Ascending aorta (tissue), 2 donors: ENCODE measurements at regions of chr4 and their contacts with region 1.

Region 1: DNA sequence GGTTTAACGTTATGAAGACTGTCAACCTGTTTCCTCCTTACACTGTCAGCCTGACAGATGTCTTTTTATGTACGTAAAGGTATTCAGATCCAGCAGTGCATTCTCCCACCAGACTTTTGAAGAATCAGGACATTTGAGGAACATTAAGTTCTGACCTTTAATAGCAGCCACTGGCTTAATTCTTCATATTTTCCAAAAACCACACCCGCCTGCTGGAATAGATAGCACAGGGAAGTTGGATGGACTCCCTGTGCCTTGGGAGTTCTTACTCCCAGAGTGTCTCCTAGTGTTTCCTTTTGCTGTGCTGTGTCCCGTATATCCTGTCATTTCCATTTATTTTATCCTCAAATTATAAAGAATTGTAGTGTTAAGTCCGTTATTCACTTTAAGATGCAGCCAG is 94.5 kb downstream of the AFF1 start:
- DNase-seq: peak in 1 of 2 donors; percentile 77
- H3K4me3 ChIP-seq: peak overlapping the region in 1 of 2 donors; percentile 8
- H3K27ac ChIP-seq: peak overlapping the region; percentile 48 to 61
- H3K4me1 ChIP-seq: peaks cover 16 to 61% of the 10 kb centered on the region in 2 donors
- H3K27me3 ChIP-seq: no peaks in the 10 kb centered on the region
- CTCF ChIP-seq: no peak

Region 2: GRCh38 chr4:87014284-87014782 is 15.0 kb before region 1 on chr4:
- intact Hi-C with region 1: loop called (anchors 2 kb)
- DNase-seq: no peak
- H3K4me3 ChIP-seq: peak overlapping the region in 1 of 2 donors; percentile 34
- H3K27ac ChIP-seq: peak overlapping the region; percentile 52 to 63
- H3K4me1 ChIP-seq: peaks cover 8 to 49% of the 10 kb centered on the region in 2 donors
- H3K27me3 ChIP-seq: no peaks in the 10 kb centered on the region
- CTCF ChIP-seq: no peak

Region 3: DNA sequence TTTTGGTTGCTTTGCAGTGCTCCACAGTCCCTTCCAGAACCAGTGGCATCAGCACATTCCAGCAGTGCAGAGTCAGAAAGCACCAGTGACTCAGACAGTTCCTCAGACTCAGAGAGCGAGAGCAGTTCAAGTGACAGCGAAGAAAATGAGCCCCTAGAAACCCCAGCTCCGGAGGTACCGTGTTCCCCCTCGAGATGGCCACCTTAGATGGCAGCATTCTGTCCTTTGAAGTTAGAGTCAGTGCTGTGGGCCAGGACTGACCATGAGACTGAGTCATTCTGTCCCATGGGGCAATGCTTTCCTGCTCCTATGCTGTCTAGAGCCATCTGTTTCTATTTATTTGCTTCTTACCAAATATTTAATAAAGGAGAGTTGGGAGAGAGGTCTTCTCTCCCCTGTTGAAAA is 78.8 kb after region 1 on chr4:
- intact Hi-C with region 1: no loop called
- DNase-seq: peak in 1 of 2 donors; percentile 84
- H3K4me3 ChIP-seq: peak overlapping the region in 1 of 2 donors; percentile 29
- H3K27ac ChIP-seq: peak overlapping the region; percentile 59
- H3K4me1 ChIP-seq: peaks cover 5 to 32% of the 10 kb centered on the region in 2 donors
- H3K27me3 ChIP-seq: no peaks in the 10 kb centered on the region
- CTCF ChIP-seq: no peak

Region 4: GRCh38 chr4:87144356-87144755 is 115.0 kb after region 1 on chr4:
- intact Hi-C with region 1: no loop called
- DNase-seq: no peak
- H3K4me3 ChIP-seq: no peak overlapping the region
- H3K27ac ChIP-seq: no peak overlapping the region
- H3K4me1 ChIP-seq: no peaks in the 10 kb centered on the region
- H3K27me3 ChIP-seq: no peaks in the 10 kb centered on the region
- CTCF ChIP-seq: no peak

Region 5: DNA sequence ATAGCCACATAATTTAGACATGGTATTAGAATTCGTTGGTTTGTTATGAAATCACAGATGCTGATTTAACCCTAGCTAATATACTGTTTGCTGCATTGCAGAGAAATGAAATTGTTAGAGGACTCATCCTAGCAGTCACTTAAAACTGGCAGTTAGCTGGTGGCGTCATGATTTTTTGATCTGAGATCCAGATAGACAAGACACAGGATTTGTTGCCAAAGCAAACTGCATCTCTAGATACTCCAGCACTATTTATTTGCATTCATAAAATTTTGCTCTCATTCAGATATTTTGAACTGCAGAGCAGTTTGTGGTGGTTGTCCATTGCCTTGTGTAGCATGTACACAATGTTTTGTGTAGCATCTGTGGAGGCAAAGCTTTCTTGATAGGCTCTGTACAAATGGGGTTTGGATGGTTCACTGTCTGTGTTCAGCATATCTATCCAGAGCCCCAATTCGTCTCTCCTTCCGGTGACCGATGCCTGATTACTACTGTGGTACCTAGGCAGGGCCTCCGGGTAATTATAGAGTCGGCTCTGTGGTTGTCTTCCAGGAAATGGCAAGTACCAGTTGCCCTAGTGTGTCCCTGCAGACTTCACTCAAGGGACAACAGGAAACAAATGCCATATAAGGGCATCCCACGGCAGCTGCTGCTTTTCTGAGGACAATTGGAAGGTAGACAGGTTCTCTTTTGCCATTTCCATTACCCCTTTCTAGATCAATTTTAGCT is 529.9 kb after region 1 on chr4:
- intact Hi-C with region 1: no loop called
- DNase-seq: peak in 1 of 2 donors; percentile 73
- H3K4me3 ChIP-seq: no peak overlapping the region
- H3K27ac ChIP-seq: no peak overlapping the region
- H3K4me1 ChIP-seq: peaks cover 7% of the 10 kb centered on the region in 2 donors
- H3K27me3 ChIP-seq: no peaks in the 10 kb centered on the region
- CTCF ChIP-seq: no peak